Aorta (tissue), 5 donors: ENCODE measurements at regions of chr10 and their contacts with region 1.

Region 1: DNA sequence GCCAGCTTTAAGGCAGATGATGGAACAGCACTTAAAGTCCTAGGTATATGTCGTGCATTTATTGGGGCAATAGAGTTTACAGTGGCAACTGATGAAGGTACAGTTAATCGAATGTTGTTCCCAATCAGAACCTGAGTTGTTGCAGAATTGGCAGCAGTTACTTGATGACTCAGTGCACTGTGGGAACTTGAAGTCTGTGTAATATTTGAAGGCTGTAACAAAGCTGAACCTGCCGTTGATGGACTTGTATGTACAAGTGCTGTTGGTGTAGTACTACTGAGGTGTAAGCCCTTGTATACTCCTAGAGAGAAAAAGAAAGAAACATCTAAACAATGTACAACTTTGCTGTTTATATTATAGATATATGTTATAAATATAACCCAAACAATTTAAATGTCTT is 75.3 kb downstream of the EPC1 start:
- DNase-seq: no peak
- ATAC-seq: no peak
- H3K4me3 ChIP-seq: no peak overlapping the region
- H3K27ac ChIP-seq: no peak overlapping the region
- H3K4me1 ChIP-seq: peaks cover 0 to 2% of the 10 kb centered on the region in 2 donors
- H3K27me3 ChIP-seq: no peaks in the 10 kb centered on the region

Region 2: GRCh38 chr10:32017021-32017420 is 254.6 kb before region 1 on chr10:
- intact Hi-C with region 1: no loop called
- DNase-seq: no peak
- ATAC-seq: no peak
- H3K4me3 ChIP-seq: no peak overlapping the region
- H3K27ac ChIP-seq: no peak overlapping the region
- H3K4me1 ChIP-seq: no peaks in the 10 kb centered on the region
- H3K27me3 ChIP-seq: no peaks in the 10 kb centered on the region

Region 3: DNA sequence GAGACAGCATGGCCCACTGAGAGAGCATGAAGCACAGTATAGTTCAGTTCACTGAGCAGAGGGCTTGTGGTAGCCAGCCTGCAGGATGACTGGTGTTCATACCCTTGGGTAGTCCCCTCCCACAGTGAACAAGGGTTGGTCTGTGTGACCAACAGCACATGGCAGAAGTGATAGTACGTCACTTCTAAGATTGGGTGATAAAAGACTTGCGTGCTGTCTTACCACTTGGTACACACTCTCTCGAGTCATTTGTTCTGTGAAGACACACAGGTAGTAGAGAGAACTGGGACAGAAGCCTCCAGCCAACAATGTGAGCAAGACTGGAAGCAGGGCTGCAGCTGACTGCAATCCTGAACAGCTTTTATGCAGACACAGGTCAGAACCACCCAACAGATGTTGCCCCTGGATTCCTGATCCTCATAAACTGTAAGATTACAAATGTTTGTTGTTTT is 60.7 kb after region 1 on chr10:
- intact Hi-C with region 1: loop called in 1 of 2 experiments (anchors 10 kb)
- DNase-seq: no peak
- ATAC-seq: peak; percentile 67
- H3K4me3 ChIP-seq: no peak overlapping the region
- H3K27ac ChIP-seq: no peak overlapping the region
- H3K4me1 ChIP-seq: peaks cover 9 to 34% of the 10 kb centered on the region in 2 donors
- H3K27me3 ChIP-seq: no peaks in the 10 kb centered on the region